ENCODE measurements at regions of chr3 and their contacts with region 1.

Region 1: GRCh38 chr3:129439817-129440617 is at the starts of genes IFT122 and MBD4:
- DNase-seq: peak; percentile 96
- ATAC-seq: peak; percentile 87
- H3K4me3 ChIP-seq: peak within 1 kb of the TSS; percentile 96
- H3K27ac ChIP-seq: peak within 1 kb of the TSS; percentile 81
- H3K4me1 ChIP-seq: peaks cover 16% of the 10 kb centered on the region
- H3K27me3 ChIP-seq: no peaks in the 10 kb centered on the region
- CTCF ChIP-seq: no peak
- total RNA-seq, gene IFT122: 10.2 and 13.8 TPM in 2 replicates
- total RNA-seq, gene MBD4: 11.4 and 21.1 TPM in 2 replicates

Region 2: GRCh38 chr3:129383292-129383860 is 56.6 kb before region 1 on chr3:
- CTCF ChIA-PET with region 1: interaction called, 8 read pairs
- POLR2A ChIA-PET with region 1: no interaction called
- intact Hi-C with region 1: loop called (anchors 5 kb)
- DNase-seq: peak; percentile 73
- ATAC-seq: peak; percentile 98
- H3K4me3 ChIP-seq: no peak overlapping the region
- H3K27ac ChIP-seq: no peak overlapping the region
- H3K4me1 ChIP-seq: peaks cover 4% of the 10 kb centered on the region
- H3K27me3 ChIP-seq: no peaks in the 10 kb centered on the region
- CTCF ChIP-seq: peak; percentile 79

Region 3: GRCh38 chr3:129399145-129399894 is 40.7 kb before region 1 on chr3:
- CTCF ChIA-PET with region 1: no interaction called
- POLR2A ChIA-PET with region 1: no interaction called
- intact Hi-C with region 1: loop called (anchors 1 kb)
- DNase-seq: peak; percentile 93
- ATAC-seq: peak; percentile 92
- H3K4me3 ChIP-seq: peak overlapping the region; percentile 89
- H3K27ac ChIP-seq: peak overlapping the region; percentile 53
- H3K4me1 ChIP-seq: peaks cover 8% of the 10 kb centered on the region
- H3K27me3 ChIP-seq: no peaks in the 10 kb centered on the region
- CTCF ChIP-seq: peak; percentile 74

Region 4: GRCh38 chr3:129507181-129507831 is 67.3 kb after region 1 on chr3:
- CTCF ChIA-PET with region 1: no interaction called
- POLR2A ChIA-PET with region 1: no interaction called
- intact Hi-C with region 1: no loop called
- DNase-seq: no peak
- ATAC-seq: no peak
- H3K4me3 ChIP-seq: no peak overlapping the region
- H3K27ac ChIP-seq: no peak overlapping the region
- H3K4me1 ChIP-seq: peaks cover 6% of the 10 kb centered on the region; the same call in 1 of the 2 replicates
- H3K27me3 ChIP-seq: no peaks in the 10 kb centered on the region
- CTCF ChIP-seq: no peak

Region 5: GRCh38 chr3:129908381-129908780 is 468.4 kb after region 1 on chr3:
- CTCF ChIA-PET with region 1: no interaction called
- POLR2A ChIA-PET with region 1: interaction called, 23 read pairs
- intact Hi-C with region 1: no loop called
- DNase-seq: peak; percentile 54
- ATAC-seq: peak; percentile 76
- H3K4me3 ChIP-seq: no peak overlapping the region
- H3K27ac ChIP-seq: peak overlapping the region; percentile 75
- H3K4me1 ChIP-seq: peaks cover 6% of the 10 kb centered on the region; the same call in 1 of the 2 replicates
- H3K27me3 ChIP-seq: no peaks in the 10 kb centered on the region
- CTCF ChIP-seq: no peak

Measured in PC-3 (cell line).